Caki2 (cell line): ENCODE measurements at regions of chr2 and their contacts with region 1.

Region 1: DNA sequence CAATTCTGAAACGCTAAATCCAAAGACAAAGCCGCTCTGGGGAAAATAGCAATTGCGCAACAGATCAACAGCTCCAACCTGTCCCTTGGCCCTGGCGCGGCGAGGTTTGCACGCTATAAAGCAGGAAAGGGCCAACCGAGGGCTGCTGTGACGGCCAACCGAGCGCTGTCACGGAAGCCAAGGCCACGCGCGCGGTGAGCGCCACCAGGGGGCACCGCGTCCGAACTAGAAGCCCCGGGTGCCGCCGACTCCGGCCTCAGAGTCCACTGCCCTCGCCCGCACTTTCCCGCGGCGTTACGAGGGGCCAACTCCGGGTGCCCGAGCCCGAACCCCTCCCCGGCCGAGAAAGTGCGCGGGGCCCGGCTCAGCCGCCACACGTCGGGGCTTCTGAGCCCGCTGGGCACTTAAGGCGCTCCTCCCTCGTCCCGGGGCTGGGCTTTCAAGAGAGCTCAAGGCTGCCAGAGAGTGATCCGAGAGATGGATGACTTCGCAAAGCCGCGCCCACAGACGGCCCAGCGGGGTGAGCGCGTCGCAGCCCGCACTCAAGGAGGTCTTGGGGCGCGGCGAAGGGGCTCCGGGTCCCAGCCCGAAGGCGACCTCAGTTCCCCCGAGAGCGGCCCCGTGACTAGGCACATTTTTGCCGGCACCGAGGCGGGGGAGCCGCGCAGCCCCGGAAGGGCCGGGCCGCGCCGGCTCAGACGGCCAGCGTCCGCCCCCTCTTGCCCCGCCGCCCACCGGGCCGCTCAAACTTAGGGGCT is 897 bp downstream of the NFE2L2 start:
- DNase-seq: peak; percentile 97

Region 2: DNA sequence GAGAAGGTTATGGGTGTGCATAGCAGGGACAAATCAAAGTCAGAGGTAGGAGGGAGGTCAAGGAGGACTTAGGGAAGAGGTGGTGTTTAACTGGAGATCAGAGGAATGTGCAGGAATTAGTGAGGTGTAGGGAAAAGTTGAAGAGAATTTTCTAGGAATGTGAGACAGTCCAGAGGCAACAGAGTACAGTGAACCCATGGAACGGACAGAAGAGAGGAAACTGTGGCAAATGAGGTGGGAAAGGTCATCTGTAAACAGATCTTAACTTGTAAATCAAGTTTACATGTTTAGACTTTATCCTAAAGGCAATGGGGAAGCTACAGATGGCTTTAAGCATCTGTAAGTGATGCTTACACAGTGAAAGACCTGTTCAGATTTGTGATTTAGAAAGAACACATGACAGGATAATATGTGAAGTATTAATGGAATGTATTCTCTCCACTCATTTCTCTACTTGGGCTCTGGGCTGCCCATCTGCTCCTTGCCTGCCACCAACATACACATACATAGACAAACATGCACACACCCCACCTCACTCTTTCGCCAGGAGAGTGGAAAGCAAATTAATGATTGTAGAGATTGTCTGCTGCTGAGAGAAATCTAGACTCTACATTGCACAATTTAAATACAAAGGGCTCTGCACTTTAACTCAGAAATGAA is 61.8 kb after region 1 on chr2:
- in situ Hi-C with region 1: no loop called
- DNase-seq: peak; percentile 75

Region 3: GRCh38 chr2:177419274-177419673 is 155.6 kb after region 1 on chr2:
- in situ Hi-C with region 1: loop called (anchors 10 kb)
- DNase-seq: no peak